ENCODE measurements at regions of chr1 and their contacts with region 1.

Region 1: GRCh38 chr1:159009704-159010361 is at the start of gene IFI16:
- DNase-seq: peak; percentile 84 to 96 (median 93)
- H3K4me3 ChIP-seq: peak within 1 kb of the TSS; percentile 90 to 99 (median 95)
- H3K4me3 Mint-ChIP-seq: peak within 1 kb of the TSS; percentile 87 to 97
- H3K27ac ChIP-seq: peak within 1 kb of the TSS; percentile 73 to 92
- H3K27ac Mint-ChIP-seq: peak within 1 kb of the TSS; percentile 92 to 98 (median 96)
- H3K4me1 ChIP-seq: peaks cover 49 to 71% of the 10 kb centered on the region in 2 donors
- H3K4me1 Mint-ChIP-seq: peaks cover 68% of the 10 kb centered on the region
- H3K27me3 ChIP-seq: no peaks in the 10 kb centered on the region
- H3K27me3 Mint-ChIP-seq: peaks cover 0 to 2% (median 0%) of the 10 kb centered on the region in 3 donors
- CTCF ChIP-seq: no peak
- polyA plus RNA-seq, gene IFI16: 64.8 to 99.7 (median 80.1) TPM

Region 2: DNA sequence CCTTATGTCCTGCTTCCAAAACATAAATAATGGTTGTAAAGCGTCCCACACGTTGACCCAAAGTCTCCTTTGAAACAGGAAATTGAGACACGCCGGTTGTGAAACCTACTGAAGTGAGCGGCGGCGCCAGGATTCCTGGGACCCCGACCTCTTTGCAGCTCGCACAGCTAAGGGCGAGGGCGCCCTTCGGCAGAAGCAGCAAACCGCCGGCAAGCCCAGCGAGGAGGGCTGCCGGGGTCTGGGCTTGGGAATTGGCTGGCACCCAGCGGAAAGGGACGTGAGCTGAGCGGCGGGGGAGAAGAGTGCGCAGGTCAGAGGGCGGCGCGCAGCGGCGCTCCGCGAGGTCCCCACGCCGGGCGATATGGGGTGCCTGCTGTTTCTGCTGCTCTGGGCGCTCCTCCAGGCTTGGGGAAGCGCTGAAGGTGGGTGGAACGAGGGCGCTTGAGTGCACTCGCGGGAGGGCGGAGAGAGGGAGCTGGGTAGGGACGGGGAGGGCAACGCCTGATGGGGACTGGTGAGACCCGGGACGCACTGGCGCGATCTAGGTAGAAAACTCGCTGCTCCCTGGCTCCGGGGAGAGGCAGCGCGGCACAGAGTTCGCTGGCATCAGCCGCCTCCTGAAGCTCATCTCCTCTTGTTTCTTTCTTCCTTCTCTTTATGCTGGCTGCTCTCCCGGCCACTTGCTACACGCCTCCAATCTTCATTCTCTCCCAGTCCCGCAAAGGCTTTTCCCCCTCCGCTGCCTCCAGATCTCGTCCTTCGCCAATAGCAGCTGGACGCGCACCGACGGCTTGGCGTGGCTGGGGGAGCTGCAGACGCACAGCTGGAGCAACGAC is 828.9 kb before region 1 on chr1 and contains the start of gene CD1D:
- intact Hi-C with region 1: loop called in 1 of 2 experiments (anchors 10 kb)
- DNase-seq: peak; percentile 47 to 76 (median 56)
- H3K4me3 ChIP-seq: peak within 1 kb of the TSS; percentile 89 to 96 (median 92)
- H3K4me3 Mint-ChIP-seq: peak within 1 kb of the TSS; percentile 96 to 99
- H3K27ac ChIP-seq: peak within 1 kb of the TSS; percentile 91 to 92
- H3K27ac Mint-ChIP-seq: peak within 1 kb of the TSS; percentile 82 to 98 (median 96)
- H3K4me1 ChIP-seq: peaks cover 82 to 87% of the 10 kb centered on the region in 2 donors
- H3K4me1 Mint-ChIP-seq: peaks cover 90% of the 10 kb centered on the region
- H3K27me3 ChIP-seq: no peaks in the 10 kb centered on the region
- H3K27me3 Mint-ChIP-seq: peaks cover 0 to 3% (median 0%) of the 10 kb centered on the region in 3 donors
- CTCF ChIP-seq: no peak
- polyA plus RNA-seq, gene CD1D: 121 to 144 (median 134) TPM

Region 3: GRCh38 chr1:158830904-158831507 is 178.8 kb before region 1 on chr1 and contains the start of gene MNDA:
- intact Hi-C with region 1: loop called in 1 of 2 experiments (anchors 5 kb)
- DNase-seq: peak; percentile 84 to 97 (median 84)
- H3K4me3 ChIP-seq: peak within 1 kb of the TSS; percentile 86 to 100 (median 92)
- H3K4me3 Mint-ChIP-seq: peak within 1 kb of the TSS; percentile 83 to 95
- H3K27ac ChIP-seq: peak within 1 kb of the TSS; percentile 27 to 82
- H3K27ac Mint-ChIP-seq: peak within 1 kb of the TSS; percentile 88 to 96 (median 94)
- H3K4me1 ChIP-seq: peaks cover 22 to 28% of the 10 kb centered on the region in 2 donors
- H3K4me1 Mint-ChIP-seq: peaks cover 21% of the 10 kb centered on the region
- H3K27me3 ChIP-seq: no peaks in the 10 kb centered on the region
- H3K27me3 Mint-ChIP-seq: no peaks in the 10 kb centered on the region
- CTCF ChIP-seq: no peak
- polyA plus RNA-seq, gene MNDA: 365 to 1,917 (median 1,418) TPM

Region 4: DNA sequence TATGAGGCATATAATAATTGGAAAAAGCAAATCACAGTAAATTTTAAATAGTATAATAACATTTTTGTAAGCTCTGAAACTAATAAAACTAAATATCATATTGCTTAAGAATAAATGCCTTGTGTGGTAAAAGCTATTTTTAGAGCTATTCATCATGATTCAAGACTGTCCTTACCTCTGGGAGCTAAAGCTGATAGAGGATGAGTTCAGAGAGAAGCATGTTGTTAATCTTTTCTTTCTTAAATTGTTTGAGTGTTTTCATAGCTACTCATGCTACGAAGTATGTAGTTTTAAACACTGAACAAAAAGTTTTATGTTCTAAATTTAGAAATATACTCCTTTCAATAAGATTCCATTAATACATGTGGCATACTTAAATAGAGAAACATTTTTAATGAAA is 30.4 kb after region 1 on chr1:
- intact Hi-C with region 1: no loop called
- DNase-seq: no peak
- H3K4me3 ChIP-seq: no peak overlapping the region
- H3K4me3 Mint-ChIP-seq: no peak overlapping the region
- H3K27ac ChIP-seq: no peak overlapping the region
- H3K27ac Mint-ChIP-seq: no peak overlapping the region
- H3K4me1 ChIP-seq: no peaks in the 10 kb centered on the region
- H3K4me1 Mint-ChIP-seq: no peaks in the 10 kb centered on the region
- H3K27me3 ChIP-seq: no peaks in the 10 kb centered on the region
- H3K27me3 Mint-ChIP-seq: peaks cover 0 to 2% (median 0%) of the 10 kb centered on the region in 3 donors
- CTCF ChIP-seq: no peak

Region 5: DNA sequence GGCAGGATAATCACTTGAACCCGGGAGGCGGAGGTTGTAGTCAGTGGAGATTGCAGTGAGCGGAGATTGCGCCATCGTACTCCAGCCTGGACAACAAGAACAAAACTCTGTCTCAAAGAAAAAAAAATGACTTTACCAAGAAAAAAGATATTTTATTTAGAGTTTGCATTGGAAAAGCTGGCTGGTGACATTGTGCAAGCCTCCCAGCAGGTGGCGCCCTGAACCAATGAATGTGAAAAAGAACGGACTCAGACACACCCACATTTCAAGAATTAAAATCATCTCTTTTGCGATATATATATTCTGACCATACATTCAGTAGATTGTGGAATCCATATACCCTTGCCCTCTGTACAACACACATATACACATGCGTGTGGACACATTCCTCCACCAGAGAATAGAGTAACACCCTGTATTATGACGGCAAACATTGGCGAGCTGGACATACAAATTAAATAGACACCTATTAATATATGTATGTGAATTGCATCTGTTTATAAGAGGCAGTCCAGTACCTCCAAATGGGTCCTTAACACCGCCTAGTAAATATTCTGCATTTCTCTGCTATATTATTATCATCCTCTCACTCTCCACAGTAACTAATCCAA is 122.5 kb after region 1 on chr1:
- intact Hi-C with region 1: no loop called
- DNase-seq: peak; percentile 56 to 66 (median 57)
- H3K4me3 ChIP-seq: no peak overlapping the region
- H3K4me3 Mint-ChIP-seq: no peak overlapping the region
- H3K27ac ChIP-seq: no peak overlapping the region
- H3K27ac Mint-ChIP-seq: no peak overlapping the region
- H3K4me1 ChIP-seq: no peaks in the 10 kb centered on the region
- H3K4me1 Mint-ChIP-seq: peaks cover 2% of the 10 kb centered on the region
- H3K27me3 ChIP-seq: no peaks in the 10 kb centered on the region
- H3K27me3 Mint-ChIP-seq: peaks cover 0 to 3% (median 0%) of the 10 kb centered on the region in 3 donors
- CTCF ChIP-seq: peak; percentile 89